Head of caudate nucleus (tissue), 42 donors: ENCODE measurements at regions of chr4 and their contacts with region 1.

Region 1: GRCh38 chr4:54233277-54233696 is 4.2 kb downstream of the PDGFRA start:
- DNase-seq: peak; percentile 62 to 95 (median 90)

Region 2: GRCh38 chr4:53019485-53020382 is 1213.6 kb before region 1 on chr4:
- intact Hi-C with region 1: loop called (anchors 5 kb)
- DNase-seq: no peak

Region 3: DNA sequence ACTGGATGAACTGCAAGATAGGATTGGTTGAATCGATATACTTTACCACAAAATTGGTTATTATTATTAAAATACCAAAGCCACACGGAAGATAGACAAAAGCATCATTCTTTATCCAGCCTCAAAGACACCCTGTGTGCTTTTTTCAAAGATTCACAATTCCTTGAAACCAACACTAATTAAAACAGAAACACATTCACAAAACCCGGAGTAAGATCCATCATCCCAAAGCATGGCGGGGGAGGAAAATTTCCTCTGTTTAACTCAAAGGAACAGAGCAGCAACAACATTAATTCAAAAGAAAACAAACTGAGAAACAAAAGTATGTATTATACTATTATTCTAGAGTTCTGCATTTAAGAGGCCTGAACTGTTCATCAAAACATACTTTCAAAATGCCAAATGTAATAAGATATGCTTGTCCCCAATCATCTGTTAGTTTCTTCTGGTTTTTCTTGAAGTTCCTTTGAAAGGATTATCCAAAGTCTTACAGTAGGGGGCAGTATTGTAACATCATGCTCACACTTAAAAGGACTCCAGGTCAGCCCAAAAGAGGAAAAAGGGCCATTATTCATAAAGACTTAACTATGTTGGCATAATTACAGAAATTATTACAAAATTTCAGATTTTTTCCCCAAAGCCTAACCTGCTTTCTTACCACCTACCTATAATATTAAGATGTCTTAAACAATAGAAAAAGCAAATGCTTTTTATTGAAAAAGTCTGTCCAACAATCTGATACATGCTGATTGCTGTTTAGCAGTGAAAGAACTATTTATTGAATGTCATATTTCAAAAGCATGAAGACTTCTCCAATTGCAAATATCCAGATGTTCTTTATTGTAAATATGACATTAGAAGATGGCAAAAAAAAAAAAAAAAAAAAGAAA is 1036.2 kb before region 1 on chr4:
- intact Hi-C with region 1: loop called (anchors 5 kb)
- DNase-seq: peak in 4 of 42 donors; percentile 2 to 44 (median 8)

Region 4: DNA sequence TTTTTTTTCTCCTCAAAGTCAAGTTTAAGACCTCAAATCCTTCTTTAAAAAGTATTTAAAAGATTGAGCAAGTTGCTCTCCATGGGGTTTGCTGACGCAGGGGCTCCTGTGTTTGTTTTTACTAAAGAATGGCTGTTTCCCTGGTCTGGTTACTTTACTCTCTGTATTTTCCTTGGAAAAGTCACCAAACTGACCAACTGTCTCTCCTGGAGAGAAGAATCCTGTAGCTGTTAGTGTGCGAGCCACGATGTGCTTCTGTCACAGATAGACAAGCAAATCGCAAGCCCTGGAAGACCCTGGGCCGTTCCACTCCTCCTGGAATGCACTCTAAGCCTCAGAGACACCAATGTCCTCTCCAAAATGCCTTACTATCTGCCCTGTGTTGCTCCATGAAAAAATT is 380.9 kb before region 1 on chr4:
- intact Hi-C with region 1: no loop called
- DNase-seq: no peak

Region 5: DNA sequence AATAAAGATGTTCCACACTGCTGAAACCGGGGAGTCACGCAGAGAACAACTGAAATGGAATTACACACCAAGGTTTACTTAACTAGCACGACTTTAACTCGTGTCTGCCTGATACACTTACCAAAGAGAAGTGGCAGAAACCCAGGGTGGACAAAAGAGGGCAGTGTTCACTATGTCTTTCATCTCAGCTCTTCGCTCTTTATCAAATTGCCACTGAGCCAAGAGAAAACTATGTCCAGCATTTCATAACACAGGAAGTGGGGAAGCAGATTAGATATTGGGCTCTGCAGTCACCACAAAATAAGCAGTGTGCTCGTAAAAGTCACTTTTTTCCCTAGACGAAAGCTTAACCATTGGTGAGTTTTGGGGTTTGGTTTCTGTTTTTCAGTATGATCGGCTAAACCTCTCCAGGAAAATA is 324.6 kb before region 1 on chr4:
- intact Hi-C with region 1: loop called (anchors 5 kb)
- DNase-seq: peak in 25 of 42 donors; percentile 17 to 74 (median 44)

Region 6: GRCh38 chr4:53967986-53968385 is 265.3 kb before region 1 on chr4:
- intact Hi-C with region 1: no loop called
- DNase-seq: no peak